ENCODE measurements at regions of chr22 and their contacts with region 1.

Region 1: GRCh38 chr22:41403532-41404318 is 22.0 kb downstream of the TEF start:
- H3K4me3 ChIP-seq: no peak overlapping the region
- H3K27ac ChIP-seq: no peak overlapping the region
- H3K4me1 ChIP-seq: no peaks in the 10 kb centered on the region
- CTCF ChIP-seq: peak; percentile 98

Region 2: GRCh38 chr22:41381329-41382097 is 22.2 kb before region 1 on chr22 and contains the start of gene TEF:
- CTCF ChIA-PET with region 1: interaction called, 14 read pairs
- POLR2A ChIA-PET with region 1: interaction called, 5 read pairs
- H3K4me3 ChIP-seq: peak within 1 kb of the TSS; percentile 66
- H3K27ac ChIP-seq: peak within 1 kb of the TSS; percentile 75
- H3K4me1 ChIP-seq: peaks cover 9% of the 10 kb centered on the region
- CTCF ChIP-seq: no peak

Region 3: DNA sequence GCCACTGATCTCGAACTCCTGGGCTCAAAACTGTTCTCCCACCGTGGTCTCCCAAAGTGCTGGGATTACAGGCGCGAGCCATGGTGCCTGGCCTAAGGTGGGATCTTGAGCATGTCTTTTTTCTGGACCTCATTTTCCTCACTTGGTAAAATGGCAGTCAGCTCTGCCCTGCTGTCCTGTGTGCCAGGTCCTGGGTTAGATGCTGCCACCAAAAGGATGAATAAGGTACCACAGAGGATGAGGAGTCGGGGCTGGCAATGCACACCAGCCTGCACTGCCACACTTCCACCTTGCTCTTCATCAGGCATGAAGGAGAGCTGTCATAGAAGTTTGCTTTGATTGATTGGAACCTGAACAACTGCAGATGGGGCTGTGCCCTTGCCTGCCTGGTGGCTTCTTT is 97.5 kb after region 1 on chr22:
- CTCF ChIA-PET with region 1: interaction called, 21 read pairs
- POLR2A ChIA-PET with region 1: no interaction called
- H3K4me3 ChIP-seq: no peak overlapping the region
- H3K27ac ChIP-seq: no peak overlapping the region
- H3K4me1 ChIP-seq: no peaks in the 10 kb centered on the region
- CTCF ChIP-seq: no peak

Region 4: DNA sequence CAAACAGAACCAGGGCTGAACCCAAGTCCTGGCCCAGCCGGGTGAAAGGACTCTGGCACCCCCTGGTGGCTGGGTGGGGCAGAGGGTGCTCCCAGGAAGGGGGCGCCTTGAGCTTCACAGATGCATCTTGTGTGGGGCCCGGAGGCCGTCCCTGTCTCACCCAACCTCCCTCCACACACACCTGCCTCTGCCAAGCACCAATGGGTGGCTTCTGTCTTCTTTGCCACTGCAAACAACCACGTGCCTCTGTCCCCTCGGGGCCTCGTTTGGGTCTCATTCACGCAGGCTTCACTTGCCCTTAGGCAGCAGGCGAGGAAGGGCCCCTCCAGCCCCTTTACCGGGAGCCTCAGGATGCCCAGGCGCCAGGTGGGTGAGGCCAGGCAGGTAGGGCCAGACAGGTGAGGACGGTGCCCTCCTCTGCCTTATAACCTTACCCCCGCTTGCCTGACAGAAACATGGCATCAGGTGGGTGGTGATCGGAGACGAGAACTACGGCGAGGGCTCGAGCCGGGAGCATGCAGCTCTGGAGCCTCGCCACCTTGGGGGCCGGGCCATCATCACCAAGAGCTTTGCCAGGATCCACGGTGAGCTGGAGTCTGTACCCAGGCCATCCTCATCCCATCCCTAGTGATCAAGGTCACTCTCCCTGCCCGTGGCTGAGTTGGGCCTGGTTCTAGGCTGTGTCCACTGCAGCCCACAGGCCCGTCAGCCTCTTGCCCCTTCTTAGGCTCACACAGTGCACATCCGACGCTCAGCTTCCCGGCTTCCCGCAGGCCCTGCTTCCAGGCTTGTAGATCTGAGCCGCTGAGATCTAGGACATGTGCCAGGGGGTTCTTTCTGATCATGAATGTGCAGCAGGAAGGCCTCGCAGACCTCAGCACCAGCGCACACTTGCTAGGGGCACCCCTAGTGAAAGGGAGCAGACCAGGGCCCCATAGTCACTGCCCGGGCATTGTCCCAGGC is 123.4 kb after region 1 on chr22:
- CTCF ChIA-PET with region 1: interaction called, 91 read pairs
- POLR2A ChIA-PET with region 1: interaction called, 5 read pairs
- H3K4me3 ChIP-seq: no peak overlapping the region
- H3K27ac ChIP-seq: no peak overlapping the region; the same call in 1 of the 2 replicates
- H3K4me1 ChIP-seq: no peaks in the 10 kb centered on the region
- CTCF ChIP-seq: peak; percentile 90

Region 5: DNA sequence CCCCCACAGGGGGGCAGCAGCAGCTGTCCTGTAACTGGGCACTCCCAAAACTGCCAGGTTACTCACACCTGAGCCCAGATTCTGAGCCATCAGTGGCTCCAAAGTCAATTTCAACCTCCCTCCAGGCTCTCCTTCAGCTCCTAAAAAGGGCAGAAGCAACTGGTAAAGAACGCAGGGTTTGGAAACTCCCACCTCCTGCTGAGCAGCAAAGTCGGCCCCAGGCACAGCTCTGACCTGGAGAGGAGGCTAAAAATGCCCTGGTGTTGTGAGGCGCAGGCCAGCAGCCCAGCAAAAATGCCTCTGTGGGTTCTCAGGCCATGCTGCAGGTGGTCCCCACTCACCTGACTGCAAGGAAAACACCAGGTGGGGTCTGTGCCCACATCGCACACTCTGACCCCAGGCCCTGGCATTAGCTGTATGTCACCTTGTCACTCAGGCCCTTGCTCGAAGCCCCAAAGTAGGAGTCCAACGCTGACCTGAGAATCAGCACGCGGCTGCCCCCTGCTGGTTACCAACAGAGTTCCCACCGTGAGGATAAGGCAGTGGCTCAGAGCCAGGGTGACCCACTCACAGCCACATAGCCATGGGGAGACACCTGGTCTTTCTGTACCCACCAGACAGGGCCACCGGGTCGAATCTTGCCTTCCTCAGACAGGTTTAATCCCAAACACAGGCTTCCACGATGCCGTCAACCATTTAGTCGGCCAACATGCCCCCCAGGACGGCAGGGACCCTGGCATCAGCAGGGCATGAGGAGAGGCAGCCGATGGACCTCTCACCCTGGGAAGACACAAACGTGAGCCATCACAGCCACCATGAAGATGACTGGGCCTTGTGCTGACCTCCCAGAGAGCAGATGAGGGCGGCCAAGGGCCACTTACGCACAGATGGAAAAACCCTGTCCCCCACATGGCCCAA is 129.4 kb after region 1 on chr22:
- CTCF ChIA-PET with region 1: interaction called, 91 read pairs
- POLR2A ChIA-PET with region 1: no interaction called
- H3K4me3 ChIP-seq: no peak overlapping the region
- H3K27ac ChIP-seq: no peak overlapping the region
- H3K4me1 ChIP-seq: no peaks in the 10 kb centered on the region
- CTCF ChIP-seq: peak; percentile 72